ENCODE measurements at regions of chr16 and their contacts with region 1.

Region 1: GRCh38 chr16:1459967-1460366 is 14.9 kb downstream of the CLCN7 start:
- DNase-seq: no peak
- H3K4me3 ChIP-seq: no peak overlapping the region
- H3K27ac ChIP-seq: peak overlapping the region; percentile 23
- H3K4me1 ChIP-seq: no peaks in the 10 kb centered on the region
- H3K27me3 ChIP-seq: no peaks in the 10 kb centered on the region
- CTCF ChIP-seq: no peak

Region 2: GRCh38 chr16:1426734-1427471 is 33.1 kb before region 1 on chr16:
- CTCF ChIA-PET with region 1: no interaction called
- POLR2A ChIA-PET with region 1: interaction called, 13 read pairs
- intact Hi-C with region 1: no loop called
- DNase-seq: no peak
- H3K4me3 ChIP-seq: no peak overlapping the region
- H3K27ac ChIP-seq: no peak overlapping the region
- H3K4me1 ChIP-seq: peaks cover 10% of the 10 kb centered on the region
- H3K27me3 ChIP-seq: peaks cover 6% of the 10 kb centered on the region
- CTCF ChIP-seq: no peak

Region 3: DNA sequence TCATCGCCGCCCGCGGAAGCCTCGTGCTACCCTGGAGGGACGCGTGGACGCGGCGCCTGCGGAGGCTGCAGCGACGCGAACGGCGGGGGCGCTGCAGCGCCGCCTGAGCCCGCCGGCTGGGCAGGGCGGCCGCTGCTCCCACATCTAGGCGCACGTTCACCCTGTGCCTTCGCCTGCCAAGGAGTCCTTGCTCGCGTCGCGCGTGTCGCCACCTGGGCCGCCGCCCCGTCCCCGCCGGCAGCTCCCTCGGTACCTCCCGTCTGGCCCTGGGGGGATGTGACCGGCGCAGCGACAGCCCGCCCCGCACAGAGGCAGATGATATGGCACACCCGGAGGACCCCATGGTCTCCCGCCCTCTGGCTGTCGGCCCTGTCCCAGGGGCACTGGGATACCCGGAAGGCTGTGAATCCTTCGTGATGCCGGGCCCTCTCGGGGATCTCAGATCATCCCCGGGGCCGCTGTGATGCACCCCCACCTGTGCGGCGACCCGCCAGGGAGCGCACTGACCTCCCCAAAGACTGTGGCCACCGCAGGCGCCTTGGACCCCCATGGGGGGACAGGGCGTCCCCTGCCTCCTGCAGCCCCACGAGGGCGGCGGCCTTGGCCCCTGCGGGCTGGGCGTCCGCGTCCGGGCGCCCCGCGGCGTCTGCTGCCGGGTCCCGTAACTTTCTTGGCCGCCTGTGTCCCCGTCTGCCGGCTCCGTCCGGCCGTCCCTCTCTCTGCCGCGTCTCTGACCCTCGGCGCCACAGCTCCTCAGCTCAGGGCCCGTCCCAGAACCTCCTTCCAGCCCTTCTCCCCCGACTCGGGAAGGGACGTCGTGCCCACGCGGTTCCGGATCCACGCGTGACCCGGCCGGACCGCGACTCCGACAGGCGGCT is 1014.3 kb after region 1 on chr16:
- CTCF ChIA-PET with region 1: no interaction called
- POLR2A ChIA-PET with region 1: no interaction called
- intact Hi-C with region 1: no loop called
- DNase-seq: peak; percentile 70
- H3K4me3 ChIP-seq: peak overlapping the region; percentile 87
- H3K27ac ChIP-seq: peak overlapping the region; percentile 88
- H3K4me1 ChIP-seq: peaks cover 47% of the 10 kb centered on the region
- H3K27me3 ChIP-seq: no peaks in the 10 kb centered on the region
- CTCF ChIP-seq: peak; percentile 36; the same call in 1 of the 2 replicates